WTC11 (cell line): ENCODE measurements at regions of chr22 and their contacts with region 1.

Region 1: DNA sequence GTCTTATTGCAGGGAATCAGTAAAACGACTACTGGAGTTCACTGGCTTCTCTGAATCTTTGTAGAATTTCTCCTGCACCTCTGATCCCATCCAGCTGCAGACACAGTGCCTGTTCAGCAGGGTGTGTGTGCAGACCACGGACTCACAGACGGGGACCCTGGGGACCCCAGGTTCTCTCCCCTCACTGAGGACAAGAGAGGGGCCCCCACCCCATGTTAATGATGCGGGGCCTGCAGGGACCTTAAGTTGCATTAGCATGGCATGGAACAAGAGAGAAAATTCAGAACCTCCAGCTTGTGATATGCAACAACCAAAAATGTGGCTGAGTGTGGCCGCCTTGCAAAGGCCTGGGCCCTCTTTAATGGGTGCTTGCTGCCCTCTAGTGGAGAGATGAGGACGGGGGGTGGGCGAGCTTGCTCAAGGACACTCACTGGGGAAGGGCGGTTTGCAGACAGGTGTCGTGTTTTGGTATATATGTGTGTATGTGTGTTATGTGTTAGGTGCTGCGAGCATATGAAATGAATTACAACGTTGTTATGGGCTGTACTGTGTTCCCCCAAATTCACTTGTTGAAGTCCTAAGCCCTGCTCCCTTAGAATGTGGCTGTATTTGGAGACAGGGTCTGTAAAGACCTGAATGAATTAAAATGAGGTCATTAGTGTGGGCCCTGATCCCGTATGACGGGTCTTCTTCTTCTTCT is 84.4 kb upstream of the SEPTIN5 start:
- DNase-seq: peak; percentile 92
- ATAC-seq: peak; percentile 79
- H3K4me3 Mint-ChIP-seq: no peak overlapping the region
- H3K27ac Mint-ChIP-seq: no peak overlapping the region; the same call in 1 of the 2 replicates
- H3K4me1 Mint-ChIP-seq: peaks cover 24% of the 10 kb centered on the region
- H3K27me3 Mint-ChIP-seq: no peaks in the 10 kb centered on the region
- CTCF ChIP-seq: peak; percentile 79

Region 2: GRCh38 chr22:19178656-19179496 is 451.0 kb before region 1 on chr22 and contains the start of gene SLC25A1:
- CTCF ChIA-PET with region 1: interaction called, 13 read pairs
- POLR2A ChIA-PET with region 1: no interaction called
- DNase-seq: peak; percentile 89
- ATAC-seq: peak; percentile 66
- H3K4me3 Mint-ChIP-seq: peak within 1 kb of the TSS; percentile 81
- H3K27ac Mint-ChIP-seq: peak within 1 kb of the TSS; percentile 91
- H3K4me1 Mint-ChIP-seq: peaks cover 26% of the 10 kb centered on the region
- H3K27me3 Mint-ChIP-seq: no peaks in the 10 kb centered on the region; the same call in 1 of the 2 replicates
- CTCF ChIP-seq: no peak
- total RNA-seq, gene SLC25A1: 201 to 213 TPM (median 204 TPM) in 3 replicates

Region 3: GRCh38 chr22:19495562-19496323 is 134.1 kb before region 1 on chr22:
- CTCF ChIA-PET with region 1: interaction called, 39 read pairs
- POLR2A ChIA-PET with region 1: no interaction called
- DNase-seq: no peak
- ATAC-seq: no peak
- H3K4me3 Mint-ChIP-seq: no peak overlapping the region
- H3K27ac Mint-ChIP-seq: no peak overlapping the region
- H3K4me1 Mint-ChIP-seq: no peaks in the 10 kb centered on the region
- H3K27me3 Mint-ChIP-seq: no peaks in the 10 kb centered on the region
- CTCF ChIP-seq: no peak

Region 4: DNA sequence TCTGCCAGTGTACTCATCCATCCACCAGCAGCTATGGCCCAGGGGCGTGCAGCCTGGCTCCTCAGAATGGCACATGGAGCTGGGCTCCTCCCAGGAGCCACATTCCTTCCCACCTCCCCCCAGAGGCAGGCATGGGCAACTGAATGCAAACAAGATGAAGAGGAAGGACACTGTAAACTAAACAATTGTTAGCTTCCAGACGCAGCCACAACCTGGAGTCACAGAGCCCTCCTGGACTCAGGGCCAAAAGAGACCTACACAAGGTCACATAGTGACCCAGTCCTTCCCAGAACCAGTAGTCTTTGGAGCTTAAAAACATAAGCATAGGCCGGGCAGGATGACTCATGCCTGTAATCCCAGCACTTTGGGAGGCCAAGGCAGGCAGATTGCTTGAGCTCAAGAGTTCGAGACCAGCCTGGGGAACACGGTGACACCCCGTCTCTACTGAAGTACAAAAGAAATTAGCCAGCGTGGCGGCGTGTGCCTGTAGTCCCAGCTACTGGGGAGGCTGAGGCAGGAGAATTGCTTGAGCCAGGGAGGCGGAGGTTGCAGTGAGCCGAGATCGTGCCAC is 75.0 kb before region 1 on chr22:
- CTCF ChIA-PET with region 1: interaction called, 22 read pairs
- POLR2A ChIA-PET with region 1: no interaction called
- DNase-seq: peak; percentile 74
- ATAC-seq: peak; percentile 97
- H3K4me3 Mint-ChIP-seq: no peak overlapping the region
- H3K27ac Mint-ChIP-seq: 0 out of 2 replicates have a peak overlapping the region, but pooled peaks have one; percentile 27
- H3K4me1 Mint-ChIP-seq: peaks cover 14% of the 10 kb centered on the region
- H3K27me3 Mint-ChIP-seq: no peaks in the 10 kb centered on the region; the same call in 1 of the 2 replicates
- CTCF ChIP-seq: no peak

Region 5: DNA sequence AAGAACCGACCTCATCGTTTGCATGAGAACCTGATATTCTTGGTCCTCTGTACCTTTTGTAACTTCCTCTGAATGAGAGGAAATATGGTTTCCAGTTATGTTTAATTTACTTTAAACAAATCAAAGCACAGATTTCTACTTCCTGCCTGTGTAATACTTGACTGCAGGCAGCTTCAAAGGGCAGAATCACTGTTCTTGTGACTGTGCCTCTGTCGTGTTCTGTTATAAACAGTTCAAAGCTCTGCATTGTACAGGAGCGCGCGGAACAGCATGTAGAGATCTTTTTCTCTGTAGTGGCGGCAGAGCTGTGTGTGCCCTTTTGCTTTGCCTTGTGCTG is 32.5 kb before region 1 on chr22:
- CTCF ChIA-PET with region 1: interaction called, 12 read pairs
- POLR2A ChIA-PET with region 1: no interaction called
- DNase-seq: no peak
- ATAC-seq: no peak
- H3K4me3 Mint-ChIP-seq: no peak overlapping the region
- H3K27ac Mint-ChIP-seq: no peak overlapping the region
- H3K4me1 Mint-ChIP-seq: peaks cover 14% of the 10 kb centered on the region
- H3K27me3 Mint-ChIP-seq: no peaks in the 10 kb centered on the region
- CTCF ChIP-seq: no peak

Region 6: DNA sequence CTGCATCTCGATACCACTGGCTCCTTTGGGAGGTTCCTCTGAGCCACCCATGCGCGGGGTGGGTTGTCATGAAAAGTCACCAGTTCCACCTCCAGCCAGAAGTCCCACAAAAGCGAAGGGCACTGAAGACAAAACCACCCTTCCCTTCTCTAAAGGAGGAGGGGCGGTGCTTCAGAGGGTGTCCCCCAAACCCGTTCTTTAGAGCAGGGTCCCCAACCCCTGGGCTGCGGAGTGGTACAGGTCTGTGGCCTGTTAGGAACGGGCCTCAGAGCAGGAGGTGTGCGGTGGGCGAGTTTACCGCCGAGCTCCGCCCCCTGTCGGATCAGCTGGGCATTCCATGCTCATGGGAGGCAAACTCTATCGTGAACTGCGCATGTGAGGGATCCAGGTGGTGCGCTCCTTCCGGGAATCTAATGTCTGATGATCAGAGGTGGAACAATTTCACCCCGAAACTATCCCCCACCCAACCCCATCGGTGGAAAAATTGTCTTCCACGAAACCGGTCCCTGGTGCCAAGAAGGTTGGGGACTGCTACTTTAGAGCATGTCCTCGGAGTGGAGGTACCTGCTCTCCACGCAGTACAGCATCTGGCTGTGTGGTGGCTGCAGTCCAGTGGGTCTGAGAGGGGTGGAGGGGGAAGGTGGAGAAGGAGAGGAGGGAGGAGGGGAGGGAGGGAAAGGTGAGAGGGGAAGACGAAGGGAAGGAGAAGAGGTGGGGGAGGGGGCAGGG is 11.5 kb after region 1 on chr22:
- CTCF ChIA-PET with region 1: interaction called, 17 read pairs
- POLR2A ChIA-PET with region 1: no interaction called
- DNase-seq: peak; percentile 85
- ATAC-seq: peak; percentile 95
- H3K4me3 Mint-ChIP-seq: peak overlapping the region; percentile 47
- H3K27ac Mint-ChIP-seq: no peak overlapping the region
- H3K4me1 Mint-ChIP-seq: peaks cover 13% of the 10 kb centered on the region
- H3K27me3 Mint-ChIP-seq: peaks cover 15% of the 10 kb centered on the region
- CTCF ChIP-seq: peak; percentile 69

Region 7: DNA sequence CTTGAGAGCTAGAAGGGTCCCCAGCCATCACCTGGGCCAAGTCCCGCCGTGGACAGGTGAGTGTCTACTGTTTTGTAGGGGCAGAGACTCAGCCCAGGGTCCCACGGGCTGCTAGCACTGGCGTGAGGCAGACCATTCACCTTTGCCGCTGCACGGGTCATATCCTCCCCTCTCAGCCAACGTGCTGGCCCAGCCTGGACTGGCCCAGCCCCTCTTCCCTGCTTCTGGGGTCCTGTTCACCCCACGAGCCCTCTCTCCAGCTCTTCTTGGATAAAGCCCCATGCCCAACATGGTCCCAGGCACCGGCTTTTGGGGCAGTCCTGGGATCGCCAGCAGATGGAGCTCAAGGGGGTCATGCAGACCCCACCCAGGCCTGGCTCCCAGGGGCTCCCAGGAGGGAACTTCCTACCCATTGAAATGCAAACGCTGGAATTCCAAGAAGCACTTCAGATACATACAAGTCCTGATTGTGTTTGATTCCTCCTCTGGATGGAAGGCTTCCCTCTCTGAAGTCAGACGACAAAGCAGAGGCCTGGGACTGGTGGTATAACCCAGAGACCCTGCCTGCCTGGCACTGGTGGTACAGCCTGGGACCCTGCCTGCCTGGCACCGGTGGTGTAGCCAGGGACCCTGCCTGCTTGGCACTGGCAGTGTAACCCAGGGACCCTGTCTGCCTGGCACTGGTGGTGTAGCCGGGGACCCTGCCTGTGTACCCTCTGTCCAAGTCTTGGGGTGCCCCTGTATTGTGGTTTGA is 75.5 kb after region 1 on chr22:
- CTCF ChIA-PET with region 1: interaction called, 12 read pairs
- POLR2A ChIA-PET with region 1: no interaction called
- DNase-seq: peak; percentile 91
- ATAC-seq: peak; percentile 90
- H3K4me3 Mint-ChIP-seq: no peak overlapping the region
- H3K27ac Mint-ChIP-seq: peak overlapping the region; percentile 72; the same call in 1 of the 2 replicates
- H3K4me1 Mint-ChIP-seq: peaks cover 40% of the 10 kb centered on the region
- H3K27me3 Mint-ChIP-seq: peaks cover 3% of the 10 kb centered on the region
- CTCF ChIP-seq: 0 out of 2 replicates have a peak, but pooled peaks have one; percentile 23

Region 8: DNA sequence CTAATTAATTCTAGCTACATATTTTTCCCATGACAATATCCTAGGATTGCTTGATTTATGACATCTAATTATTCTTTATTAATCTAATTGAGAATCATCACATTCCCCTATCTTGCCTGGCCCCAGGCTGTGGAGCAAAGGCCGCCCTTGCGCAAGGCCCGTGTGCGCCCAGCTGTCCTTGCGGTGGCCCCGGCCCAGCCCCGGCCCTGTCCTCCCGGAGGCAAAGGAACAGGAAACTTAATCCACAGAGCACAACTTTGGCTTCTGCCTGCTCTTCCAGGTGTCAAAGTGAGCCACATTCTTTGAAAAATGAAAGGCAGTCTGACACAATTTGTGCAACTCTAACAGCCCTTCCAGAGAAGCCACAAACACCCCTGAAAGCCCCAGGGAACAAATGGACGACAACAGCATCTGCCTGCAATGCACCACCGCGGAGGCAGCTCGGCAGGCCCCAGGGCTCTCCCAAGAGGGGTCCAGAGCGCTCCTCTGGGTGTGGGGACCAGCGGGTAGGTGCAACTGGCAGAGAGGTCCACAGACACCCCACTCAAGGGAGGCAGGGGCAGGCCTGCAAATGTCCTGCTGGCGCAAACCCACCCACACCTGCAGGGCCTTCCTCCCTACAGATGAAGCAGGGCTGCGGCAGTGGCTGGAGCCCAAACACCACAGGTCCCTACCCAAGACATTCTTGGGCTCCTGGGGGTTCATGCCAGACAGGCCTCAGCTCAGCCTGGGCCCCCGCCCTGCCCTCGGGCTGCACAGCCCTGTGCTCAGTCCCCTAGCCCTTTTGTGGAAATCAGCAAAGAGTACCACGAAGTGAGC is 194.5 kb after region 1 on chr22:
- CTCF ChIA-PET with region 1: no interaction called
- POLR2A ChIA-PET with region 1: no interaction called
- DNase-seq: no peak
- ATAC-seq: no peak
- H3K4me3 Mint-ChIP-seq: no peak overlapping the region
- H3K27ac Mint-ChIP-seq: no peak overlapping the region
- H3K4me1 Mint-ChIP-seq: peaks cover 5% of the 10 kb centered on the region; the same call in 1 of the 2 replicates
- H3K27me3 Mint-ChIP-seq: no peaks in the 10 kb centered on the region
- CTCF ChIP-seq: no peak